ENCODE measurements at regions of chr16 and their contacts with region 1.

Region 1: GRCh38 chr16:67561824-67562525 is 351 bp upstream of the CTCF start:
- DNase-seq: peak; percentile 77 to 98 (median 89)

Region 2: GRCh38 chr16:67490335-67491096 is 71.5 kb before region 1 on chr16:
- intact Hi-C with region 1: loop called (anchors 5 kb)
- DNase-seq: no peak

Region 3: DNA sequence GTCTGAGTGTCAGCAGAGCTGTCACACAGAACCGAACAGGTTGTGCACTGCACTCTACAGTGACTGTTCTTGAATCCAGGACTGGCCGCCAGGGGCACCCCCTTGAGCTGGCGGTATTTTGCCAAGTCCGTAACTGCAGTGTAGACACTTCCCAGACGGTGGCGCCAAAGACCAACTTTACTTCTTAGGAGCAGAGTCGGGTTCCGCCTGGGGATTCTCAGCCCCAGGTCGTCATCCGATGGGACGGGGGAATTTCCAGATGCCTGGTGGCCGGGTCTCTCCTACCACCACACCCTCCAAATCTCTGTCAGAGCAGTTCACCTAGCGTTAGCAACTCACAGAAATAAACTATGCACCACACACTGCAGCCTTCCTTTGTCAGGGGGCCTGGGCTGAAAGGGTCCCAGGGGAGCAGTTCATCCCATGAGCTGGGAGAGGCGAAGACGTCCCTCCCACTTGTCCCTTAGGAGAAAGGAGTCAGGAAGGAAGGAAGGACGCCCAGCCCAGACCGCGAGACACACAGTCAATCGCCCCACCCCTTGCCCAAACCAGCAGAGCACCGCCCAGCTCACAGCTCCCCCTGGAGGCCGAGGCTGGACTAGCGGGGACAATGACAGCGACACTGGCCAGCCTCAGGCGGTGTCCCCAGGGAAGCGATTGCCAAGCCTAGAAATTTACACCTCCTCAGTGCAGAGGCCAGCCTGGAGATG is 40.7 kb before region 1 on chr16:
- intact Hi-C with region 1: loop called (anchors 1 kb)
- DNase-seq: peak; percentile 86 to 99 (median 96)

Region 4: GRCh38 chr16:67660564-67661028 is 98.6 kb after region 1 on chr16 and contains the start of gene PARD6A:
- intact Hi-C with region 1: loop called (anchors 1 kb)
- DNase-seq: peak; percentile 86 to 100 (median 97)

Measured in posterior cingulate gyrus (tissue), 11 donors.